Dorsolateral prefrontal cortex (tissue), 120 donors: ENCODE measurements at regions of chr1 and their contacts with region 1.

Region 1: DNA sequence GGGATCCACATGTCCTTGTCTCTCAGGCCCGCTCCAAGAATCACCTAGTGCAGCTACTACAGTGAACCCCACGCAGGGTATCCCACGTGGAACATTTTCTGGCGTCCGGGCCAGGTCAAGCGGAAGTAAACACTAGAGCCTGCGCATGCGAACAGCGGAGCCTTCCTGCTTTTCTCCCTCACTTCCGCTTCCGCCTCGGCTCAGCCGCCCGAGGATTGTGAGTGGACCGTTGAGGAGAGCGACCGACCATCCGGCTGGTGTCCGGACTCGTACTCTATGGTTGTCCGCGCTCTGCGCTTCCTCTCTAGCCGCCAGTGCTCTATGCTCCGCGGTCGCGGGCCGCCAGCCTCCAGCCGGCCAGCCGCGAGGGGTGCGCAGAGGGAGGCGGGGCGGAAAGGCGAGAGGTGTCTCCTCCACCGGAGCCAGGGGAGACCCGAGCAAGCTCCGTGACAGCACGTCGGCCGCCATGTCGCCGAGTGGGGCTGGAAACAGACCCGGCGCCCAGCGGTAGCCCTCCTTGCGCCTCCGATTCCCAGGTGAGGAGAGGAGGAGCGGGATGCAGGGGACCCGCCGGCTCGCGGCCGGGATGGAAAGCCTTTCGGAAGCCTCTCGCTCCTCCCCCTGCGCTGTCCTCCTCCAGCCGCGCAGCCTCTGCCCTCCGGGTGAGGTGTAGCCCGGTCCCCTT is at the starts of genes CNST and TFB2M:
- DNase-seq: peak; percentile 92 to 98 (median 96)
- H3K4me3 ChIP-seq: peak within 1 kb of the TSS; percentile 64 to 100 (median 95)
- H3K27ac ChIP-seq: peak within 1 kb of the TSS; percentile 30 to 98 (median 91)
- H3K27me3 ChIP-seq: no peaks in the 10 kb centered on the region
- CTCF ChIP-seq: peak in 48 of 56 donors; percentile 7 to 67 (median 37)
- total RNA-seq, gene CNST: 23.5 to 69.8 (median 45.5) TPM
- total RNA-seq, gene TFB2M: 3.5 to 11.0 (median 7.7) TPM

Region 2: GRCh38 chr1:246417152-246417812 is 149.0 kb before region 1 on chr1:
- intact Hi-C with region 1: no loop called
- DNase-seq: no peak
- H3K4me3 ChIP-seq: no peak overlapping the region
- H3K27ac ChIP-seq: peak overlapping the region in 1 of 59 donors; percentile 67
- H3K27me3 ChIP-seq: no peaks in the 10 kb centered on the region
- CTCF ChIP-seq: no peak

Region 3: GRCh38 chr1:246506674-246507481 is 59.4 kb before region 1 on chr1 and contains the start of gene SMYD3:
- intact Hi-C with region 1: loop called in 1 of 2 experiments (anchors 5 kb)
- DNase-seq: peak; percentile 28 to 90 (median 68)
- H3K4me3 ChIP-seq: peak within 1 kb of the TSS; percentile 62 to 93 (median 83)
- H3K27ac ChIP-seq: peak within 1 kb of the TSS in 20 of 59 donors; percentile 13 to 78 (median 52)
- H3K27me3 ChIP-seq: no peaks in the 10 kb centered on the region
- CTCF ChIP-seq: peak in 49 of 56 donors; percentile 18 to 66 (median 43)
- total RNA-seq, gene SMYD3: 28.0 to 78.9 (median 48.0) TPM

Region 4: GRCh38 chr1:246931549-246932365 is 365.5 kb after region 1 on chr1 and contains the start of gene AHCTF1:
- intact Hi-C with region 1: loop called in 1 of 2 experiments (anchors 10 kb)
- DNase-seq: peak; percentile 85 to 97 (median 96)
- H3K4me3 ChIP-seq: peak within 1 kb of the TSS; percentile 65 to 97 (median 90)
- H3K27ac ChIP-seq: peak within 1 kb of the TSS; percentile 76 to 99 (median 96)
- H3K27me3 ChIP-seq: no peaks in the 10 kb centered on the region
- CTCF ChIP-seq: peak in 36 of 56 donors; percentile 5 to 48 (median 30)
- total RNA-seq, gene AHCTF1: 28.7 to 55.3 (median 41.8) TPM